AG04450 (cell line): ENCODE measurements at regions of chr18 and their contacts with region 1.

Region 1: DNA sequence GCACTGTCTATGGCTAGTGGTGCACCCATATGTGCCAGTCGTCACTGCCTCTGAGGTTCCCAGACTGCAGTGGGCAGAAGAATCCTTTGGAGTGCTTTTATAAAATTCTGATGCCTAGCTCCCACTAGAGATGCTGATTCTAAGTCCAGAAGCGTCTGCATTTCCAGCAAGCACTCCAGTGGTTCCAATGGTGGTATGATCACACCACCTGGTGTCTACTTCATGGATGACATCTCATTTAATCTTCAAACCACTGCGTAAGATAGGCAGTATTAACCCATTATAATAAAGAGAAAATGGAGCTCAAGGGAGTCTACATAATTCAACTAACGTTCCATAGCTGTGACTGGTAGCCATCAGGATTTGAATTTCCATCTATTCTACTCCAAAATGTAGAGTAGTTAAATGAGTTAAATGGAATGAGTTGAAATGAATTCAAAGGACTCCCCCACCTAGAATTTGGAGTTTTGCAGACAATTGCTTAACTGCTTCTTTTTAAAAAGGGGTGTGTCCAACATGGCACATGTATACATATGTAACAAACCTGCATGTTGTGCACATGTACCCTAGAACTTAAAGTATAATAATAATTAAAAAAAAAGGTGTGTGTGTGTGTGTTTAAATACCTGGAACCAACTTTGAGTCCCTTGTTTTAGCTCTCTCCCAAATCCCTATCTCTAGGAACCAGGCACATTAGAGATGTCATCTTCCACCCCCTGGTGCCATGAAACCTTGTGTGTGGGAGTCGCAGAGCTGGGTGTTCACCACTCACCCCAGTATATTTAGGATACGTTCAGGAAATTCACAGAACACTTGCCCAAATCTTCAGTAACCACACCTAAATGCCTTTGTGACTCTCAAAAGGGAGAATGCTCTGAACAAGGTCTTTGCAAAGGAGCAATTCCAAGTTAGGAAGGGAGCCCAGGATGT is 14.1 kb downstream of the LAMA3 start:
- DNase-seq: peak; percentile 55
- H3K4me3 ChIP-seq: no peak overlapping the region
- H3K27ac ChIP-seq: no peak overlapping the region
- H3K27me3 ChIP-seq: peaks cover 34% of the 10 kb centered on the region
- CTCF ChIP-seq: peak; percentile 72

Region 2: GRCh38 chr18:23515911-23516546 is 187.3 kb before region 1 on chr18:
- CTCF ChIA-PET with region 1: interaction called, 49 read pairs
- POLR2A ChIA-PET with region 1: no interaction called
- DNase-seq: peak; percentile 46
- H3K4me3 ChIP-seq: no peak overlapping the region
- H3K27ac ChIP-seq: no peak overlapping the region
- H3K27me3 ChIP-seq: no peaks in the 10 kb centered on the region
- CTCF ChIP-seq: peak; percentile 93

Region 3: DNA sequence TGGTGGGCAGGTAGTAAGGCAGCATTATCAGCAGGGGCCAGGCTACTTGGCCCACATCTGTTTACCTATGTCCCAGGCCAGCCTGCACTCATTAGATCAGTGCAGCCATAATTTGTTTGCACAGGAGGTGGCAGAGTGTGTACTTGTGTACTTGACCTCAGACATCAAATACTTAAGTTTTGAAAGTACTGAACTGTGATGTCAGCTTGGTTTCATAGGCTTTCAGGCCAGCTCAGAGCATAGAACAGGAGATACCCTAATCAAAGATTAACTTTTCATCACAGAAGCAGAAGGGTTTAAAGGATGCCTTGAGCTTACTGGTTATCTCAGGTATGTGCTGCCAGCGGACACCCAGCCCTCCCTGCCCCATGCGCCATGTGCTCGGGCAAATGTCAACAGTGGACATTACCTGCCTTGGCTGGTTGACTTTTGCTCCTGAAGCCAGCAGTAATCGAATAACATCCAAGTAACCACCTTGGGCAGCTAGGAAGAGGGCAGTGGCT is 73.8 kb before region 1 on chr18:
- CTCF ChIA-PET with region 1: interaction called, 162 read pairs
- POLR2A ChIA-PET with region 1: no interaction called
- DNase-seq: no peak
- H3K4me3 ChIP-seq: no peak overlapping the region
- H3K27ac ChIP-seq: no peak overlapping the region
- H3K27me3 ChIP-seq: no peaks in the 10 kb centered on the region
- CTCF ChIP-seq: no peak

Region 4: GRCh38 chr18:23714576-23714975 is 11.3 kb after region 1 on chr18:
- CTCF ChIA-PET with region 1: interaction called, 15 read pairs
- POLR2A ChIA-PET with region 1: interaction called, 5 read pairs
- DNase-seq: no peak
- H3K4me3 ChIP-seq: no peak overlapping the region
- H3K27ac ChIP-seq: no peak overlapping the region
- H3K27me3 ChIP-seq: no peaks in the 10 kb centered on the region
- CTCF ChIP-seq: no peak